Activated CD4-positive, alpha-beta T cell treated with anti-CD3 and anti-CD28 coated beads, Interleukin-2, amount 10 ng/mL, durations not matched to agents 24 days and 14 days (primary cell): ENCODE measurements at regions of chr7 and their contacts with region 1.

Region 1: DNA sequence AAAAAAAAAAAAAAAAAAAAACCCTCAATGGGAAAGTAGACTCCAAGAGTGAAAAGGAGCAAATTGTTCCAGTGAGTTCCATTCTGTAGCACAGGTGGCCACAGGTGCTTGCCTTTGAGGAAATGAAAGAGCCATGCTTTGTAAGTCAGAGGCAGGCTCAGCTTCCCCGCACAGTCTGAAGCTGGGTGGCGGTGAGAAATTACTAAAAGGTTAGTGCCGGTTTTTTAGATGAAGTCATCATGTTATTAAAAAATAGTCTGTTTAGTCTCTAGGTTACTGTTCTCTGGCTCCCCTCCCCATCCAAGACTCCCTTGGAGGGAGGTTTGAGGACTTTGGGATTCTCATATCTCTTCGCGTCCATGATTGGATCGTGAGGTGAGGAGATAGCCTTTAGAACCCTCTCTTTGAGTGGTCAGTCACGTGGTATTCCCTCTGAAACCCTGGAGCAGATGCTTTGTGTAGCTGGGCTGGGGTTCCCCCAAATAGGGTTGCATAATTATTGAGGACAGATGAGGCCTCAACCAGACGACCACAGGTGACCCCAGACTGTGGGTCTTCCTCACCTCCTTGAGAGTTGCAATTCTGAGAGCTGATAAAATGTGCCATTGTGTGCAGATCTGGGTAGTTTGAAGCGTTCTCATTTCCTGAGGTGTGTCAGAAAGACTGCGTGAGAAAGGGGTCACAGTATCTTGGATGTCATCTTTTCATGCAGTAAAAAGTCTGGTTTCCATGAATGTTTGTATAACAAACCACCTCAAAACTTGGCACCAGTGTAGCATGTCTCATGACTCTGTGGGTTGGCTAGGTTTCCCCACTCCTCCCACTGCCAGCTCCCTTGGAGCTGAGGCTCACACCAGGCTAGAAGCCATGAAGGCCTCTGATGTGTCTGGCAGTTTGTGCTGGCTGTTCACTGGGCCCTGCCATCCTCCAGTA is 27.1 kb downstream of the OGDH start:
- DNase-seq: peak; percentile 85
- H3K4me3 Mint-ChIP-seq: peak overlapping the region; percentile 61
- H3K27ac Mint-ChIP-seq: peak overlapping the region; percentile 95
- H3K4me1 Mint-ChIP-seq: peaks cover 75% of the 10 kb centered on the region
- H3K27me3 Mint-ChIP-seq: no peaks in the 10 kb centered on the region

Region 2: DNA sequence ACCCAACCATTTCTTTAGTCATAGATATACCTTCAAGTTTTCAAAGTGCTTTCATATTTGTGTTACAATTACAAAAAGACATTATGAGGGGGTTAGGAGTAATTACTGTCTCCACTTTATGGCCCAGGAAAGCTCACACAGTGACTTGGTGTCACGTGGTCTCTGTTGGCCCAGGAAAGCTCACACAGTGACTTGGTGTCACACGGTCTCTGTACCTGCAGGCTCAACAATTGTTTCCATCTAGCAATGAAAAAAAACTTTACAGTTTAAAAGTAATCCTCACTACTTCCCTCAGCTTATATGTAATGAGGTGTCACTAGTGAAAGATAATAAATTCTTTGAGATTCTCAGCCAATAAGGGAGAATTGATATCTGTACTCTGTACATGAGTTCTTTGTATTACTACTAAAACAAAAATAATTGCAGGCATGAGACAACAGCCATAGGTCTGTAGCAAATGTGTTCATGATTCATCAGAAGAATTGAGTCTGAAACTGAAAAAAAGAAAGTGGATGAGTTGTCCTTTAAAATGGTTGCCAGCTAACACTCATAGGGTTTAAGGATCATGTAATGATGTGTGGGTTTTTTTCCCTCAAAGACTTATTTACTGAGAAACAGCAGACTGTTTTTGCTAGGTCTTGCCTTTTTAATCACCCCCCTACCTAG is 16.2 kb before region 1 on chr7:
- intact Hi-C with region 1: loop called (anchors 1 kb)
- DNase-seq: no peak
- H3K4me3 Mint-ChIP-seq: peak overlapping the region; percentile 70
- H3K27ac Mint-ChIP-seq: peak overlapping the region; percentile 92
- H3K4me1 Mint-ChIP-seq: peaks cover 62% of the 10 kb centered on the region
- H3K27me3 Mint-ChIP-seq: no peaks in the 10 kb centered on the region

Region 3: GRCh38 chr7:44622307-44623151 is 11.0 kb before region 1 on chr7:
- intact Hi-C with region 1: loop called (anchors 1 kb)
- DNase-seq: peak; percentile 83
- H3K4me3 Mint-ChIP-seq: peak overlapping the region; percentile 53
- H3K27ac Mint-ChIP-seq: peak overlapping the region; percentile 84
- H3K4me1 Mint-ChIP-seq: peaks cover 71% of the 10 kb centered on the region
- H3K27me3 Mint-ChIP-seq: no peaks in the 10 kb centered on the region